ENCODE measurements at regions of chr12 and their contacts with region 1.

Region 1: GRCh38 chr12:52884526-52885293 is 20.2 kb downstream of the KRT8 start:
- DNase-seq: peak; percentile 85
- H3K4me3 Mint-ChIP-seq: peak overlapping the region; percentile 19
- H3K27ac Mint-ChIP-seq: peak overlapping the region; percentile 95
- H3K4me1 Mint-ChIP-seq: no peaks in the 10 kb centered on the region
- H3K27me3 Mint-ChIP-seq: no peaks in the 10 kb centered on the region
- CTCF ChIP-seq: peak; percentile 92

Region 2: GRCh38 chr12:52147367-52147972 is 737.2 kb before region 1 on chr12:
- CTCF ChIA-PET with region 1: interaction called, 19 read pairs
- intact Hi-C with region 1: loop called (anchors 5 kb)
- DNase-seq: peak; percentile 96
- H3K4me3 Mint-ChIP-seq: peak overlapping the region; percentile 60
- H3K27ac Mint-ChIP-seq: peak overlapping the region; percentile 100
- H3K4me1 Mint-ChIP-seq: peaks cover 65% of the 10 kb centered on the region
- H3K27me3 Mint-ChIP-seq: no peaks in the 10 kb centered on the region
- CTCF ChIP-seq: no peak

Region 3: DNA sequence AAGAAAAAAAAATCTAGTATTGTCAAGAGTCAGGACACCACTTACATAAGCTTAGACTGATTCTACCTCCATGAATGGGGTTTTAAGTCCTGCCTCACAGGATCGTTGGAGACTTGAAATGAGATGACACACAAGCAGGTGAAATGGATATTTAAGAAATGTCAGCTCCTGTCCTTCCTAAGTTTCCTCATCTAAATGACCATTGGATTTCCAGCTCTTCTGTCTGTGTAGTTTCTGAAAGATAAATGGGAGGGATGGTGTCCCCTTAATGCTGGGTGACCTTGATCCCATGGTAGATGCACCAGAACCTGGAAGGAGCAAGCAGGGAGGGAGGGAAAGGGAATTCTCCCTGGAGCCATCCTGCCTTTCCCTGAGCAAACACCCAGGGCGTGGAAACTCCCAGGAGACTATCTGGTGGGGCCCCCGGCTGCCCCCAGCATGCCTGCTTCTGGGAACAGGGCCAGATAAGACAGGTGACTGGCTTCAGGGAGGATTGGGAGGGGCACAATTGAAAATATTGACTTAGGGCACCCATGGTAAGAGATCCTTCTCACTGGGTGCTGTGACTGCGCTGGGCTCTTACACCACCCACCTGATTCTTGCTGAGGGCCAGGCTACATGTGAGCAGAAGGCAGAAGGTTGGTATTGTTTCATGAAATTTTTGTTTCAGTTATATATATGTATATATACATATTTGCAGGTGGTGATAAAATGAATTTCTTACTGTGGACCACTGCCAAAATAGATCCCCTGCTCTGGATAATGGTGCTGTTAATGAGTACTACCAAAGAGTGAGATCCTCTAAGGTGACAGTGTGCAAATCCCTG is 10.6 kb after region 1 on chr12:
- CTCF ChIA-PET with region 1: interaction called, 10 read pairs
- intact Hi-C with region 1: no loop called
- DNase-seq: peak; percentile 71
- H3K4me3 Mint-ChIP-seq: peak overlapping the region; percentile 58
- H3K27ac Mint-ChIP-seq: peak overlapping the region; percentile 90
- H3K4me1 Mint-ChIP-seq: peaks cover 31% of the 10 kb centered on the region
- H3K27me3 Mint-ChIP-seq: no peaks in the 10 kb centered on the region
- CTCF ChIP-seq: no peak

Region 4: DNA sequence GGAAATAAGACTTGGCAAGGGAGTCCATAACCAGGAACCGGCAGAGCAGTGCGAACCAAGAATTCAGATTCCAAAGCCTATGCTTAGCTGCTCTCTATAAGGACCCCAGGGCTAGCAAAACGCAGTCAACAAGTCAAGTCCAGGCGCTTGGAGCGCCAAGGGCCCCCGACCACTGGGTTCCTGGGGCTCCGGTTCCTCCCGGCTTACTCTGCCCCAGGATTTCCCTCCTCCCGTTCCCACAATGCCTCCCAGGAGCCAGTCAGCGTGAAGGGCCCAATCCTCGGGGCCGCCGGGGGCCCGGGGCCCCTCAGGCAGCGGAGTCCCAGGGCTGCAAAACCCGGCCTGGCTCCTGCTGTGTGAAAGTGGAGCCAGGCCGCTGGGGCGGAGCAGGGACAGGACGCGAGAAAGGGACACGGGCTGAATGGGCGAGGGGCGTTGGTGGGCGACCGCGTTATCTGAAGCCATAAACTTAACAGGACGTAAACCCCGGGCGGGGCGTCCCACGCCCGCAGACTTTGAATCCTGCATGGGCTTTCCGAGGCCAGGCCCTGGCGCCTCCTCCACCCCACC is 18.7 kb after region 1 on chr12:
- CTCF ChIA-PET with region 1: interaction called, 23 read pairs
- intact Hi-C with region 1: no loop called
- DNase-seq: no peak
- H3K4me3 Mint-ChIP-seq: peak overlapping the region; percentile 76
- H3K27ac Mint-ChIP-seq: peak overlapping the region; percentile 97
- H3K4me1 Mint-ChIP-seq: peaks cover 43% of the 10 kb centered on the region
- H3K27me3 Mint-ChIP-seq: no peaks in the 10 kb centered on the region
- CTCF ChIP-seq: no peak

Region 5: DNA sequence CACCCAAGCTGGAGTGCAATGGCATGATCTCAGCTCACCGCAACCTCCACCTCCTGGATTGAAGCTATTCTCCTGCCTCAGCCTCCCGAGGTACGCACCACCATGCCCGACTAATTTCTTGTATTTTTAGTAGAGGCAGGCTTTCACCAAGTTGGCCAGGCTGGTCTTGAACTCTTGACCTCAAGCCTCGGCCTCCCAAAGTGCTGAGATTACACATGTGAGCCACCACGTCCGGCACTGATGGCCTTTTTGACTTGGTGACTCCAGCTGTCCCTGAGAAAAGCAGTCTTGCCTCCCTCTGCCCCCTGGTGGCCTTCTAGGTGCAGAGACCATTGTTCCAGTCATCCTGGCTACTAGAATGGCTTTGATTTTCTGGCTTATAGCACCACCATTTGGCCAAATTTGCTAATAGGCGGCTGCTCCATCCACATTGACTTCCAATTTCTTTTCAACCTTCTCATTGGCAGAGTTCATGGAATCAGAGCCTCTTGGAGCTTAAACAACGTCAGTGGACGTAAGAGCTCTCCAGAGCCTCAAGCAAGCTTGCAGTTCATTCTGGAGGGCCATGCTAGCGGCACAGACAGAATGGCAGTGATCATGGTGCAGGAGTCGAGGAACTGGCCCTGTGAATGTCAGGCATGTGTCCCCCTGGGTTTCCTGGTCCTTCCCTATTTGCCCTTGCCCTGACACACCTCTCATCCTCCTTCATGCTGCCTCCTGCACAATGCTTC is 96.1 kb after region 1 on chr12:
- CTCF ChIA-PET with region 1: interaction called, 85 read pairs
- intact Hi-C with region 1: loop called (anchors 1 kb)
- DNase-seq: peak; percentile 89
- H3K4me3 Mint-ChIP-seq: no peak overlapping the region
- H3K27ac Mint-ChIP-seq: peak overlapping the region; percentile 47
- H3K4me1 Mint-ChIP-seq: peaks cover 36% of the 10 kb centered on the region
- H3K27me3 Mint-ChIP-seq: no peaks in the 10 kb centered on the region
- CTCF ChIP-seq: peak; percentile 82